ENCODE measurements at regions of chr4 and their contacts with region 1.

Region 1: DNA sequence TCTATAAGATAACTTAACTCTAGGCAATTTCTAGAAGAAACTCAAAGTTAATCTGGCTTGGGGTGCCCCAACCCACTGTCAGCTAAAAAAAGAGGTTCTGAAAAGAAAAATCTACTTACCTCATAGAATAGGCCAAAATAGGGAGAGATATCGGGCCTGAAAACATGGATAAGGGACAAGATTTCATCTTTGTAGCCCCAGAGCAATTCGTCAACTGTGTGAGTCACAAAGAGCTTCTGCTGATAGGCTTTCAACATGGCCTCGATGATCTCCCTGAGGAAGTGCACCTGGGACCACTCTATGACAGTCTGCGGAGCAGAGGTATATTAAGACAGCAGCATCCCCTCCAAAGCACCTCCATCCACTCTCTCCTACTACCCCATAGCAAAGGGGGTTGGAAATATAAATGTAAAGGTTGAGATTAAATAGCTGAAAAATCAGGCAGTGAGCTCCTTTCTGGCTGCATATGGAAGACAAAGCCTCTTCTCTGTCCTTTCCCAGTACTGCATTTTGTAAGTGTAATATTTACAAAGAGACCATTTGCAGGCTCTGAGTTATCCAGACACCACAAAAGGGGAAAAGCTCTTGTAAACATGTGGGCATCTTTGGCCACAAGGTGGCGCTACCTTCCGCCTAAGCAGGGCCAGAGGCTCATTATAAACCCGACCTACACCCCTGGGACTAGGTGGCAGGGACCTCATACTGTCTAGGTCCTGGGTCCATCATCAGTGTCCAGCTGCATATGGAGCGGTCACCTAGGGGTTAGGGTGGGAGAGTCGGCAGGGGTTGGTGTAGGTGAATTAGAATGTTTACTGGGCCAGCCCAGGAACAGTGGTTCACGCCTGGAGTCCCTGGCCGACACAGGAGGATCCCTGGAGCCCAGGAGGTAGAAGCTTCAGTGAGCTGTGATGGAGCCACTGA is 31.5 kb upstream of the NUP54 start:
- DNase-seq: peak; percentile 91
- H3K4me3 ChIP-seq: no peak overlapping the region
- H3K27ac ChIP-seq: no peak overlapping the region
- H3K4me1 ChIP-seq: peaks cover 0 to 9% (median 0%) of the 10 kb centered on the region in 4 donors
- H3K27me3 ChIP-seq: no peaks in the 10 kb centered on the region
- CTCF ChIP-seq: peak; percentile 84 to 93 (median 92)
- EP300 ChIP-seq: no peak
- POLR2A ChIP-seq: no peak

Region 2: GRCh38 chr4:75158451-75158850 is 1021.2 kb before region 1 on chr4:
- in situ Hi-C with region 1: no loop called
- intact Hi-C with region 1: no loop called
- DNase-seq: no peak
- H3K4me3 ChIP-seq: no peak overlapping the region
- H3K27ac ChIP-seq: no peak overlapping the region
- H3K4me1 ChIP-seq: no peaks in the 10 kb centered on the region
- H3K27me3 ChIP-seq: no peaks in the 10 kb centered on the region
- CTCF ChIP-seq: no peak
- EP300 ChIP-seq: no peak
- POLR2A ChIP-seq: no peak

Region 3: GRCh38 chr4:75338352-75338880 is 841.2 kb before region 1 on chr4:
- in situ Hi-C with region 1: no loop called
- intact Hi-C with region 1: no loop called
- DNase-seq: no peak
- H3K4me3 ChIP-seq: no peak overlapping the region
- H3K27ac ChIP-seq: no peak overlapping the region
- H3K4me1 ChIP-seq: no peaks in the 10 kb centered on the region
- H3K27me3 ChIP-seq: no peaks in the 10 kb centered on the region
- CTCF ChIP-seq: no peak
- EP300 ChIP-seq: no peak
- POLR2A ChIP-seq: no peak

Region 4: DNA sequence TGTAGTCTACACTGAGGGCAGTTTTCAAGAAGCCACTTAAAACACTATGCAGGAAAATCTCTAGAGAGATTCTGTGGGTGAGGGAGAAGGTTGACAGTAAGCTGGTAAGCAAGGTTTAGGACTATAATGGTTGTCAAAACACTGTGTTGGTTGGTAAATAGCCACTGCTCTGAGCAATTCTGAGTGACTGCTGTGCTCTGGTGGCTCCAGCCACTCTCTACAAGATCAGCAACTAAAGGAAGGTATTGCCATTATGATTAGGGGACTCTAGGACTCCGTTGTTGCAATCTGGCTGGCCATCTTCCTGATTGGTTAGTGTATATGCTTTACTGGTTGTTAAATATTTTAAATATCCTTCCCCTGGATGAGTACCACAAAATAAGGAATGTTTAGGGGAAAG is 66.4 kb after region 1 on chr4:
- in situ Hi-C with region 1: loop called in 1 of 4 experiments (anchors 10 kb)
- intact Hi-C with region 1: loop called (anchors 5 kb)
- DNase-seq: no peak
- H3K4me3 ChIP-seq: no peak overlapping the region
- H3K27ac ChIP-seq: no peak overlapping the region
- H3K4me1 ChIP-seq: peaks cover 3 to 5% (median 4%) of the 10 kb centered on the region in 4 donors
- H3K27me3 ChIP-seq: no peaks in the 10 kb centered on the region
- CTCF ChIP-seq: no peak
- EP300 ChIP-seq: no peak
- POLR2A ChIP-seq: no peak

Region 5: DNA sequence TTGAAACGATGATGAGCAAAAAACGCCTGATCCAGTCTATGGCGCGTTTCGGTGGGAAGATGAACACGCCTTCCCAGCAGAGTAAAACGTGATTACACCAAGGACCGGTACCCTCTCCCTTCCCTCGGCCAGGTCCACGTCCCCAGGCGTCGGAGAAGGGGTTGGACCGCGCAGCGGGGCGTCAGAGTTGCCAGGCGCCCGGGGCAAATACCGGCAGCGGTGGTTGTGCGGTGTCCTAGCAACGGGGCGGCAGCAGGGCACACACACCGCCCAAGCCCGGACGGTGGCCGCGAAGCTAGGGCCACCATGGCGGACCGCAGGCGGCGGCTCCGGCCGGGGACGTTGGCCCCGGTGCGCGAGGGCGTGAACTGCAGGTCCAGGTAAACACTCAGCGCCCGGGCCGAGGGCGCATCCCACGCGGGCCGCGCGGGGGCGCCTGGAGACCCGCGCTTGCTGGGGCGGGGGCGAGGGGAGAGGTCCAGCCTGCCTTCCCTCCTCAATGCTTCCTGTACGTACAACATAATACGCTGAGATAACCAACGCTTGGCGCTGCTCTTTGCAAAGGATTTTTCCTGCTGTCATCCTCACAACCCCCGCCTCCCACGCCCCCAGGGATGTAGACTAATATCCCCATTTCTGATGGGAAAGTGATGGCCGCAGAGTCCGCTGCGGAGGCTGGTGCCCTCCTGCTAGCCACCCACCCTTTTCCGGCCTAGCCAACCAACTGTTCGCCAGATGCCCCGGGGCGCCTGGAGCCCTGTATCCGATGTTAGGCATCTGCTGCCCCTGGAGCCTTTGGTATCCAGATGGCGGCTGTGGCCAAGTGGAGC is 72.0 kb after region 1 on chr4 and contains the start of gene FAM47E:
- in situ Hi-C with region 1: loop called in 1 of 4 experiments (anchors 10 kb)
- intact Hi-C with region 1: loop called (anchors 5 kb)
- DNase-seq: peak; percentile 86
- H3K4me3 ChIP-seq: peak within 1 kb of the TSS; percentile 16 to 60 (median 44)
- H3K27ac ChIP-seq: peak within 1 kb of the TSS; percentile 28 to 54 (median 46)
- H3K4me1 ChIP-seq: peaks cover 4 to 12% (median 7%) of the 10 kb centered on the region in 4 donors
- H3K27me3 ChIP-seq: peaks cover 3% of the 10 kb centered on the region
- CTCF ChIP-seq: peak; percentile 40 to 73 (median 48)
- EP300 ChIP-seq: no peak
- POLR2A ChIP-seq: peak; percentile 35
- total RNA-seq, gene FAM47E: 0.20 to 7.8 (median 2.8) TPM

Region 6: GRCh38 chr4:76305971-76306881 is 126.6 kb after region 1 on chr4 and contains the start of gene STBD1:
- in situ Hi-C with region 1: no loop called
- intact Hi-C with region 1: loop called (anchors 10 kb)
- DNase-seq: peak; percentile 89
- H3K4me3 ChIP-seq: peak within 1 kb of the TSS; percentile 66 to 89 (median 85)
- H3K27ac ChIP-seq: peak within 1 kb of the TSS; percentile 89 to 96 (median 93)
- H3K4me1 ChIP-seq: peaks cover 10 to 61% (median 29%) of the 10 kb centered on the region in 4 donors
- H3K27me3 ChIP-seq: no peaks in the 10 kb centered on the region
- CTCF ChIP-seq: no peak
- EP300 ChIP-seq: no peak
- POLR2A ChIP-seq: peak; percentile 88
- total RNA-seq, gene STBD1: 5.4 to 48.7 (median 17.0) TPM

Region 7: DNA sequence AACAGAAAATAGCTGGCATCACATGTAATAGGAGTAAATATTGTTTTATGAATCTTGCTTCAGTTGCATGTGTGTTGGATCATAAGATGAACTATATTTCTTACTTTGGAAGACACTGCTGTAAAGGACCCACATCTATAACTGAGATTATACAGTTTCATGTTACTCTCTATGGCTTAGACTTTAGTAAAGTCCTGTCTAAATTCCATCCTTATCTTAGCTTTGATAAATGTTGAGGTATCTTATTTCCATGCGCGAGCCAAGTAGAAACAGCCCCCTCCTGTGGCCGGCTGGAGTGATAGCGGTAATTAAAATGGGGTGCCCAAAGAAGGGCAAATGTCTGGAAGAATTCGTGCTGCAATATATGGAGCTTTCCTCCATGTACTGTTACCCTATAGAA is 198.3 kb after region 1 on chr4:
- in situ Hi-C with region 1: loop called in 3 of 4 experiments (anchors 10 to 25 kb)
- intact Hi-C with region 1: no loop called
- DNase-seq: peak; percentile 60
- H3K4me3 ChIP-seq: no peak overlapping the region
- H3K27ac ChIP-seq: no peak overlapping the region
- H3K4me1 ChIP-seq: peaks cover 0 to 13% (median 5%) of the 10 kb centered on the region in 4 donors
- H3K27me3 ChIP-seq: no peaks in the 10 kb centered on the region
- CTCF ChIP-seq: peak; percentile 48 to 64 (median 58)
- EP300 ChIP-seq: no peak
- POLR2A ChIP-seq: no peak

Region 8: GRCh38 chr4:76388160-76388908 is 208.7 kb after region 1 on chr4:
- in situ Hi-C with region 1: loop called in 1 of 4 experiments (anchors 10 kb)
- intact Hi-C with region 1: no loop called
- DNase-seq: no peak
- H3K4me3 ChIP-seq: no peak overlapping the region
- H3K27ac ChIP-seq: no peak overlapping the region
- H3K4me1 ChIP-seq: no peaks in the 10 kb centered on the region
- H3K27me3 ChIP-seq: no peaks in the 10 kb centered on the region
- CTCF ChIP-seq: no peak
- EP300 ChIP-seq: no peak
- POLR2A ChIP-seq: no peak

Measured in transverse colon (tissue), 4 donors.